ENCODE measurements at regions of chr13 and their contacts with region 1.

Region 1: GRCh38 chr13:33542283-33543088 is 256.9 kb upstream of the STARD13 start:
- DNase-seq: peak; percentile 99 to 100 (median 99)
- H3K4me3 ChIP-seq: peak overlapping the region; percentile 75 to 82
- H3K4me3 Mint-ChIP-seq: peak overlapping the region; percentile 92 to 98 (median 94)
- H3K27ac ChIP-seq: peak overlapping the region; percentile 96
- H3K27ac Mint-ChIP-seq: peak overlapping the region; percentile 98 to 100 (median 98)
- H3K4me1 ChIP-seq: peaks cover 43% of the 10 kb centered on the region
- H3K4me1 Mint-ChIP-seq: peaks cover 28 to 53% (median 39%) of the 10 kb centered on the region in 4 donors
- H3K27me3 ChIP-seq: no peaks in the 10 kb centered on the region
- H3K27me3 Mint-ChIP-seq: no peaks in the 10 kb centered on the region

Region 2: GRCh38 chr13:32427852-32428580 is 1114.5 kb before region 1 on chr13 and contains the start of gene N4BP2L1:
- CTCF ChIA-PET with region 1: no interaction called
- POLR2A ChIA-PET with region 1: interaction called, 15 read pairs
- intact Hi-C with region 1: no loop called
- DNase-seq: peak; percentile 80 to 94 (median 82)
- H3K4me3 ChIP-seq: peak within 1 kb of the TSS; percentile 77 to 85
- H3K4me3 Mint-ChIP-seq: peak within 1 kb of the TSS; percentile 94 to 99 (median 96)
- H3K27ac ChIP-seq: peak within 1 kb of the TSS; percentile 84
- H3K27ac Mint-ChIP-seq: peak within 1 kb of the TSS; percentile 96 to 99 (median 98)
- H3K4me1 ChIP-seq: peaks cover 46% of the 10 kb centered on the region
- H3K4me1 Mint-ChIP-seq: peaks cover 27 to 54% (median 40%) of the 10 kb centered on the region in 4 donors
- H3K27me3 ChIP-seq: no peaks in the 10 kb centered on the region
- H3K27me3 Mint-ChIP-seq: no peaks in the 10 kb centered on the region
- total RNA-seq, gene N4BP2L1: 51.6 to 51.9 TPM

Region 3: DNA sequence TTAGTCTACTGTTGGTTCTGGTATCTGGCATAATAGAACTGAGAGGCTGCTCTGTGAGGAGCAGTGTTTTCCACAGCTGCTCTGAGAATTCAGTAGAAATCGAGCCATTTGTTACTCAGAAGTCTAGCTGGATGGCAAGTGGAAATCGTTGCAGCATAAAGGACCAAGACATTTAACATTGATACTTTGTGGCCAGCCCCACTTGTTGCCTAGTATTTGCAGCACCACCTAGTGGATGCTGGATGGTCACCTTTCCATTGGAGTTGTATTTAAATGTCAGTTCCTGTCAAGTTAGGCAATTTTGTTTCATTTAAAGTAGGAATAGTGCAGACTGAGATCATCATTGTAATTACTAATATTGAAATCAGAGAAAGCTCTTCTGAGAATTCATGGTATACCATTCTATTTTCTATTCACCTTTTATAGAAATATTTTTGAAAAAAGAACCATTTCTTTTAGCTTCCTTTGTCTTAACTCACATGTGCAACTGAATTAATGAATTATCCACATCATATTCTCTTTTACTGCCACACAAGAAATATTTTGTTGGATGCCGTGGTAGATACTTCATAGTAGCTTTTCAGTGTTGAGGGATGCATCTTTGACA is 891.7 kb before region 1 on chr13:
- CTCF ChIA-PET with region 1: interaction called, 3 read pairs
- POLR2A ChIA-PET with region 1: interaction called, 4 read pairs
- intact Hi-C with region 1: loop called (anchors 5 kb)
- DNase-seq: peak; percentile 42 to 56 (median 52)
- H3K4me3 ChIP-seq: no peak overlapping the region
- H3K4me3 Mint-ChIP-seq: no peak overlapping the region
- H3K27ac ChIP-seq: no peak overlapping the region
- H3K27ac Mint-ChIP-seq: peak overlapping the region in 2 of 7 donors; percentile 28 to 44
- H3K4me1 ChIP-seq: peaks cover 23% of the 10 kb centered on the region
- H3K4me1 Mint-ChIP-seq: peaks cover 24 to 52% (median 40%) of the 10 kb centered on the region in 4 donors
- H3K27me3 ChIP-seq: no peaks in the 10 kb centered on the region
- H3K27me3 Mint-ChIP-seq: no peaks in the 10 kb centered on the region

Region 4: GRCh38 chr13:33610471-33611015 is 68.1 kb after region 1 on chr13:
- CTCF ChIA-PET with region 1: interaction called, 9 read pairs
- POLR2A ChIA-PET with region 1: interaction called, 34 read pairs
- intact Hi-C with region 1: loop called (anchors 1 kb)
- DNase-seq: peak; percentile 54 to 74 (median 62)
- H3K4me3 ChIP-seq: peak overlapping the region in 1 of 2 donors; percentile 46
- H3K4me3 Mint-ChIP-seq: peak overlapping the region; percentile 85 to 94 (median 89)
- H3K27ac ChIP-seq: peak overlapping the region; percentile 36
- H3K27ac Mint-ChIP-seq: peak overlapping the region; percentile 80 to 96 (median 94)
- H3K4me1 ChIP-seq: peaks cover 33% of the 10 kb centered on the region
- H3K4me1 Mint-ChIP-seq: peaks cover 20 to 35% (median 31%) of the 10 kb centered on the region in 4 donors
- H3K27me3 ChIP-seq: no peaks in the 10 kb centered on the region
- H3K27me3 Mint-ChIP-seq: no peaks in the 10 kb centered on the region

Region 5: DNA sequence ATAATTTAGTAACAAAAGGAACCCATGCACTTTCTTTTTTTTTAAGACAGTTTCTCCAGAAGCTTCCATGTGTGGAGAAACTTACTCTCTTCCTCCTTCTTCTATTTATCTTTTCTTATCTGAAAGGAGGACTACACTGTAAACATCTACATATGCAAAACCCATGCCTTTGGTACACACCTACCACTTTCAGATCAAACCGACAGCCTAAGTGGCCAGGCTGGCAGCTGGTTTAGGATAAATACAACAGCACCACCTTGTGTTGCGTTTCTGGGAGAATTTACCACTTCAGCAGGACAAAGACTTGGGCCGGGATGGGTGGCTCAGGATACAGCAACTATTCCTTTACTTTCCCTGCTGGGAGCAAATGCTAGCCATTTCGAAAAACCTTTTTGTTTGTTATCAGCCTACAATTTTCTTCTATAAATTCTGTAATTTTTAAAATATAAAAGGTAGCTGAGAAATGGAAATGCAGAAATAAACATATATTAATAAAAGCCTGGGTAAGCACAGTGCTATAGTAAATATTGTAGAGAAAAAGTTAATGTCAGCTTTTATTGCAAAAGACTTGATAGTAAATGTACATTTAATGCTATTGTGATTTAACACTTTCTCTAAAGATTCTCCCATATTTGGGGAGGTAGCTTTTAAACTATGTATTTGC is 181.4 kb after region 1 on chr13:
- CTCF ChIA-PET with region 1: interaction called, 41 read pairs
- POLR2A ChIA-PET with region 1: interaction called, 24 read pairs
- intact Hi-C with region 1: loop called (anchors 1 kb)
- DNase-seq: peak; percentile 63 to 74 (median 72)
- H3K4me3 ChIP-seq: no peak overlapping the region
- H3K4me3 Mint-ChIP-seq: peak overlapping the region in 6 of 8 donors; percentile 17 to 70 (median 54)
- H3K27ac ChIP-seq: no peak overlapping the region
- H3K27ac Mint-ChIP-seq: peak overlapping the region in 6 of 7 donors; percentile 49 to 81 (median 64)
- H3K4me1 ChIP-seq: peaks cover 23% of the 10 kb centered on the region
- H3K4me1 Mint-ChIP-seq: peaks cover 10 to 23% (median 20%) of the 10 kb centered on the region in 4 donors
- H3K27me3 ChIP-seq: no peaks in the 10 kb centered on the region
- H3K27me3 Mint-ChIP-seq: no peaks in the 10 kb centered on the region

Region 6: DNA sequence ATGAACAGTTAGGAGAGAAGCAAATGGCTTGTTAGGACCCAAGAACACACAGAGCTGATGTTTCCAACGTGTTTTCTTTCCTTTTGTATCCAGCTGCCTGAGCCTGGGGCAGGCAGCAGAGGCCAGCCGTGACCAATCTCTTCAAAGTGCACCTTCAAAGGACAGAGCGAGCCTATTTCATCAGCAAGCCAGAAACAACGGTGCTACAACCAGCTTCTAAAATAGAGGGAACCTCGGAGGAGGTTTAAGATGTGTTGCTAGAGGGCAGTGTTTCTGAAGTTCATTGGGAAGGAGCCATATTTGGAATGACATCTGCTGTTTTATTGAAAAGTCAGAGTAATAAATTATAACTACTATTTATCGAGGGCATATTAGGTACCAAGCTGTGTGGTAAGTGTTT is 219.3 kb after region 1 on chr13:
- CTCF ChIA-PET with region 1: no interaction called
- POLR2A ChIA-PET with region 1: no interaction called
- intact Hi-C with region 1: no loop called
- DNase-seq: no peak
- H3K4me3 ChIP-seq: no peak overlapping the region
- H3K4me3 Mint-ChIP-seq: no peak overlapping the region
- H3K27ac ChIP-seq: no peak overlapping the region
- H3K27ac Mint-ChIP-seq: no peak overlapping the region
- H3K4me1 ChIP-seq: no peaks in the 10 kb centered on the region
- H3K4me1 Mint-ChIP-seq: no peaks in the 10 kb centered on the region
- H3K27me3 ChIP-seq: no peaks in the 10 kb centered on the region
- H3K27me3 Mint-ChIP-seq: peaks cover 5 to 9% of the 10 kb centered on the region in 2 donors